Head of caudate nucleus (tissue), 42 donors: ENCODE measurements at regions of chr4 and their contacts with region 1.

Region 1: GRCh38 chr4:8427743-8428292 is 12.7 kb downstream of the ACOX3 start:
- DNase-seq: peak in 4 of 42 donors; percentile 14 to 42 (median 23)

Region 2: DNA sequence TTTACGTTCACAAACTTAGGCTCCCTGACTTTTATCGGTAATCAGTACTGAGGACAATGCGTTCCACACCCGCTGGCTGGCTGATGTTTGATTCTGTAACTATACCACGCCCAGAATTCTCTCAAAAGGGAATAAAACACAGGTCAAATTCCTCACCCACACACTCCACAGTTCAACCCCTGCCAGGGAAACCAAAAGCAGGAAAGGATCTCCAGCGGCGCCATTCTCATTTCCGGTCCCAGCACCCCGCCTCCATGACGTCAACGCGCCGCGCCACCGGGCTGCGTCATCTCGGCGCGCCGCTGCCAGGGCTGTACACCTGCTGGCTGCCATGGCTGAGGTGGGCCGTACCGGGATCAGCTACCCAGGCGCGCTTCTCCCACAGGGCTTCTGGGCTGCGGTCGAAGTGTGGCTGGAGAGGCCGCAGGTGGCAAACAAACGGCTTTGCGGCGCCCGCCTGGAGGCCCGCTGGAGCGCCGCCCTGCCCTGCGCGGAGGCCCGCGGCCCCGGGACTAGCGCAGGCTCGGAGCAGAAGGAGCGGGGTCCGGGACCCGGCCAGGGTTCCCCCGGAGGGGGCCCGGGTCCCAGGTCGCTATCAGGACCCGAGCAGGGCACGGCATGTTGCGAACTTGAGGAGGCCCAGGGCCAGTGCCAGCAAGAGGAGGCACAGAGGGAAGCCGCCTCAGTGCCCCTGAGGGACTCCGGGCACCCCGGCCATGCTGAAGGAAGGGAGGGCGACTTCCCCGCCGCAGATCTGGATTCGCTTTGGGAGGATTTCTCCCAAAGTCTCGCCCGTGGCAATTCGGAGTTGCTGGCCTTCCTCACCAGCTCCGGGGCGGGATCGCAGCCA is 12.9 kb after region 1 on chr4 and contains the starts of genes ACOX3 and TRMT44:
- intact Hi-C with region 1: loop called (anchors 2 kb)
- DNase-seq: peak; percentile 83 to 97 (median 92)

Region 3: GRCh38 chr4:8515316-8516062 is 87.7 kb after region 1 on chr4:
- intact Hi-C with region 1: no loop called
- DNase-seq: no peak